MCF 10A (cell line): ENCODE measurements at regions of chrX and their contacts with region 1.

Region 1: DNA sequence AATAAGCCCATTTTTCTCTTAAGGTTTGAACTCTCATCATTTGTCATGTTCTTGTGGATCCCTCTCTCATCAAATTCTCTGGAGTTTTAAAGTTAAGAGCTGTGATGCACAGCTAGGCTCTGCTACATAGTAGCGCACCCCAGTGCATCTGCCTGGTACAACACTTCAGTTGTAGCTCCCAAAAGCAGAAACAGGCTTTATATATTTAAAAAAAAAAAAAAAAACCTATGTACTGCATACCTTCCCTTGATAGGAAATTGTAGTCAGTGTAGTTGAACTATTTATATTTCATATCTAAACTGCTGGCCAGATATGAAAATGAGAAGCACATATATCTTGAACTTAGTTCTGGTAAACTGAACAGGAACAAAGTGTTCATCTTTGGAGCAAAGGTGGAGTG is 131.4 kb downstream of the KLHL13 start:
- DNase-seq: no peak
- H3K4me3 Mint-ChIP-seq: no peak overlapping the region
- H3K27ac Mint-ChIP-seq: no peak overlapping the region
- H3K4me1 Mint-ChIP-seq: peaks cover 9% of the 10 kb centered on the region
- H3K27me3 Mint-ChIP-seq: peaks cover 7% of the 10 kb centered on the region
- CTCF ChIP-seq: no peak

Region 2: GRCh38 chrX:117972711-117973109 is 12.5 kb before region 1 on chrX:
- CTCF ChIA-PET with region 1: interaction called, 35 read pairs
- POLR2A ChIA-PET with region 1: interaction called, 6 read pairs
- intact Hi-C with region 1: no loop called
- DNase-seq: no peak
- H3K4me3 Mint-ChIP-seq: no peak overlapping the region
- H3K27ac Mint-ChIP-seq: no peak overlapping the region
- H3K4me1 Mint-ChIP-seq: no peaks in the 10 kb centered on the region
- H3K27me3 Mint-ChIP-seq: no peaks in the 10 kb centered on the region
- CTCF ChIP-seq: no peak